HepG2 (cell line): ENCODE measurements at regions of chr19 and their contacts with region 1.

Region 1: DNA sequence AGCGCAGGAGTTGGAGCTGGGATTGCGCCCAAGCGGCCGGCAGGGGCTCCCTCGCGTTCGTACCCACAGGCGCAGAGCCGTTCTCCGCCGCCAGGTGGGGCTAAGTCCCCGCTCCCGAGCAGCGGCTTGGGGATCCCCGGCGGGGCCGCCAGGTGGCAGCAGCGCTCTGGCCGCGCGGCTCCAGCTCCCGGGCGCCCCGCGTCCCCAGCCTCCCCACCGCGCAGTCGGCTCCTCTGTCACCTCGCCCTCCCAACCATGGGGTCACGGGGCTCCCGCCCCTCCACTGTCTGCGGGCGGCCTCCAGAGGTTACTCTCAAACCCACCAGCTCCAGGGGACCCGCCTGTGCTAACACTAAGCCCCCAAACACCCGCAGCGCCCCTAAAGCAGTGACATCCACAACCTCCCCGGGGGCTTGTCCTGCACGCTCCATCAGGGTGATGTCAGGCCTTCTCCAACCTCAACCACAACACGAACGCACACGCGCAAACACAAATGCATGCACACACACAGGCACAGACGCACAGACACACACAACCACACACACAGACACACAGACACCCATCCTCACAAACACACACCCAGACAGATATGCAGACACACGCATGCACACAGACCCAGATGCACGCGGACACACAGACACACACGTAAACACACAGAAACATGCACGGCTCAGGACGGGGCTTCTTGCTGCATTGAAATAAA is 18.4 kb upstream of the KCTD15 start:
- DNase-seq: peak; percentile 54
- ATAC-seq: peak; percentile 83
- H3K4me3 ChIP-seq: peak overlapping the region in 1 of 3 experiments; percentile 51; a peak in 1 of 6 replicates
- H3K27ac ChIP-seq: no peak overlapping the region
- H3K4me1 ChIP-seq: peaks cover 7% of the 10 kb centered on the region
- H3K27me3 ChIP-seq: peaks cover 6 to 52% of the 10 kb centered on the region in 2 experiments
- CTCF ChIP-seq: peak; percentile 97
- EP300 ChIP-seq: no peak
- POLR2A ChIP-seq: no peak
- RAD21 ChIP-seq: peak; percentile 100

Region 2: DNA sequence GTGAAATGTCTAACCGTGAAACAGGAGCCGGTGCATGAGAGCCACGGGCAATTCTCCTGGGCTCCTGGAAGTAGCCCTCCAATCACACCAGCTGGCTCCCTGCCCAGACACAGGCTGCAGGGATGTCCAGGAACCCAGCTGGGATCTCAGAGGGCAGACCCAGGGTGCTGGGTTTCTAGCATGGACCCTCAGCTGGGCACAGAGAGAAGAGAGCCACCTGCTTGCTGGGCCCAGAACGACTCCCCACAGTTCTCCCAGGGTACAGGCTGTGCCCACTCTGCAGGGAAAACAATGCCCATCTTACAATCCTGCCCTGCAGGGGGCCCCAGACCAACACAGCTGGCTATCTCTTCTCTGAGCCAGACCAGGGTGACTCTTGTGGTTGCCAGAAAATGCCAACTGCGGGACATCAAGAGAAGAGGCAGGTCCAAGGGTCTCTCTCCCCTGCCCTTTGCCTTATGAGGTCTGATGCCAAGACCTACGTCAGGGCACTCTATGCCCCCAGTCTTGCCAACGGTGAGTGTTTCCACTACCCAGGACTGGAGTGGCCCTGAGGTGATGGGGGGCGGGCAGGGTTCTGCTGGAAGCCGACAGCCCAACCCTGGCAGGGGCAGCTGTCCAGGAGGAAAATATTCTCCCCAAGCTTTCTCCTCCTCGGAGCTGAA is 340.1 kb before region 1 on chr19:
- CTCF ChIA-PET with region 1: no interaction called
- POLR2A ChIA-PET with region 1: no interaction called
- in situ Hi-C with region 1: no loop called
- intact Hi-C with region 1: no loop called
- DNase-seq: no peak
- ATAC-seq: peak; percentile 39; the same call in 2 of the 3 replicates
- H3K4me3 ChIP-seq: no peak overlapping the region
- H3K27ac ChIP-seq: no peak overlapping the region
- H3K4me1 ChIP-seq: peaks cover 7% of the 10 kb centered on the region; the same call in 1 of the 2 replicates
- H3K27me3 ChIP-seq: no peaks in the 10 kb centered on the region
- CTCF ChIP-seq: peak; percentile 11; the same call in 1 of the 2 replicates
- EP300 ChIP-seq: no peak
- POLR2A ChIP-seq: no peak
- RAD21 ChIP-seq: no peak

Region 3: DNA sequence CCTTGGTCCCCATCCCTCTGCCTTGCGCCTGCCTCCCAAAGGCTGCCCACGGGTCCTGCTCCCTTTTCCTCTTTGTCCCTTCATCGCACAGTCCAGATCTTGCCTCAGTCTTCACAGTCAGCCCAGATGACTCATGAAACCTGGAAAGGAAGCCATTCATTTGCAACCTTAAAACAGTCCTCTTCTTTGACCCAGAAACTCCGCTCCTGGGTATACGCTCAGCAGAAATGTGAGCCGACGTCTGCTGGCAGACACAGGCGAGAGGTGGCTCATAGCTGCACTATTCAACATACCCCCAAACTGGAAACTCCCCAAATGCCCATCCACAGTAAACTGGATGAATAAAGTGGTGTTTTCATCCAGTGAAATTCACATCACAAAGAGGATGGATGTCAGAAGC is 243.0 kb before region 1 on chr19:
- CTCF ChIA-PET with region 1: no interaction called
- POLR2A ChIA-PET with region 1: no interaction called
- in situ Hi-C with region 1: no loop called
- intact Hi-C with region 1: no loop called
- DNase-seq: no peak
- ATAC-seq: no peak
- H3K4me3 ChIP-seq: no peak overlapping the region
- H3K27ac ChIP-seq: no peak overlapping the region
- H3K4me1 ChIP-seq: no peaks in the 10 kb centered on the region
- H3K27me3 ChIP-seq: peaks cover 2 to 28% of the 10 kb centered on the region in 2 experiments; a peak in 4 of 5 replicates
- CTCF ChIP-seq: no peak
- EP300 ChIP-seq: no peak
- POLR2A ChIP-seq: no peak
- RAD21 ChIP-seq: no peak

Region 4: DNA sequence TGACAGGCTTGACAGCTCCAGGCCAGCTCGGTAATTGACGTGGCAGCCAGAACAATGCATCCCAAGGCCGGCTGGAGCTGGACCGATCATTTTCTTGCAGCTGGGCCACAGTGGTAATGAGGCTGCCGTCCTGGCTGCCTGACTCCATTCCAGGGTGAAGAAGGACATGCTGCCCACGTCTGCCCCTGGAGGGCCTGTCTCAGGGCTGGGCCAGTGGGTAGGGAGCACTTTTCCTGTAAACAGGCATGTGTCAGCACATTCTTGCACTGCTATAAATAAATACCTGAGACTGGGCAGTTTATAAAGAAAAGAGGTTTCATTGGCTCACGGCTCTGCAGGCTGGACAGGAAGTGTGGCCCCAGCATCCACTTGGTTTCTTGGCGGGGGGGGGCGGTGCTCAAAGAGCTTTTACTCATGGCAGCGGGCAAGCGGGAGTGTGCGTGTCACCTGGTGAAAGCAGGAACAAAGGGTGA is 19.7 kb before region 1 on chr19:
- CTCF ChIA-PET with region 1: no interaction called
- POLR2A ChIA-PET with region 1: no interaction called
- in situ Hi-C with region 1: no loop called
- intact Hi-C with region 1: no loop called
- DNase-seq: no peak
- ATAC-seq: no peak
- H3K4me3 ChIP-seq: no peak overlapping the region
- H3K27ac ChIP-seq: no peak overlapping the region
- H3K4me1 ChIP-seq: no peaks in the 10 kb centered on the region
- H3K27me3 ChIP-seq: peaks cover 4 to 18% of the 10 kb centered on the region in 2 experiments; a peak in 4 of 5 replicates
- CTCF ChIP-seq: no peak
- EP300 ChIP-seq: no peak
- POLR2A ChIP-seq: no peak
- RAD21 ChIP-seq: no peak

Region 5: GRCh38 chr19:33795370-33796163 is 17.3 kb after region 1 on chr19:
- CTCF ChIA-PET with region 1: interaction called, 11 read pairs
- POLR2A ChIA-PET with region 1: interaction called, 3 read pairs
- in situ Hi-C with region 1: no loop called
- intact Hi-C with region 1: no loop called
- DNase-seq: peak; percentile 66
- ATAC-seq: peak; percentile 86
- H3K4me3 ChIP-seq: peak overlapping the region; percentile 82 to 89 (median 83)
- H3K27ac ChIP-seq: peak overlapping the region; percentile 92
- H3K4me1 ChIP-seq: peaks cover 8% of the 10 kb centered on the region
- H3K27me3 ChIP-seq: peaks cover 1 to 18% of the 10 kb centered on the region in 2 experiments; a peak in 2 of 5 replicates
- CTCF ChIP-seq: peak; percentile 78
- EP300 ChIP-seq: peak in 1 of 2 experiments; percentile 54; a peak in 1 of 4 replicates
- POLR2A ChIP-seq: peak; percentile 73 to 82
- RAD21 ChIP-seq: peak; percentile 84

Region 6: DNA sequence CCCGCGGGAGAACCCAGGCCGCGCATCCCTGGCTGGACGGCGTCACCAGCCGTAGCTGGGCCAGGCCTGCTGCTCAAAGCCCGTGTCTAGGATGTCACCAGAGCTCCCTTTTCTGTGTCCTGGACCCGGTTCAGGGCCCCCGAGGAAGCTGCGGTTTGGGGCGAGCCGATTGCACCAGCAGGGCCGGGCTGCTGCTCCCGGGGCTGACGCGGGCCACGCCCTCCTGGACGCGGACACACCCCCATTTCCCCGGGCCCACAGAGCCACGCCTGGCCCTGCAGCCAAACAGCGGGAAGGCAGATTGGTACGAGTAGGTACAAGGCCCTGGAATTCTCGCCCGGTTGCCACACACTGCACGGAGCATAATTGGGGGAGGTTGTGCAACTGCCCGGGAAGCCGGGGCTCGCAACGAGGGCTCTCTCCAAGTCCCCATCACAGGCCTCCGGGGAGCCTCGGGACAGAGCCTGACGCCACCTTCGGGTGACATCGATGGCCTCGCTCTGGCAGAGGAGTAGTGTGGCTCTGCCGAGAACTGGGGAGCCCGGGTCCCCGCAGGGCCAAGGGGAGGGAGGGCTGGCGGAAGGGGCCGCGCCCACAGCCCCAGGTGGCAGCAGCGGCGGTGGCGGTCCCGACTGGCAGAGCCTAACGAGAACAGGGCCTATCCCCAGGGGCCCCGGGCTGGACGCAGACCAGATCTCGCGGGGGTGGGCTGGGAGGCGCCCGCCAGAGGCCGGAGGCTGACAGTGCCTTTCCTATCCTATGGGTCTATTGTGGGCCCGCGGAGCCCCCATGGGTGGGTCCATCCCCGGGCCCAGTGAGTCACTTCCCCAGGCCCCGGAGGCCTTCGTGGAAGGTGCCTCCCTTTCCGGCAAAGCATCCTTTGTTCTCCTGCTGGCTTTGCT is 41.9 kb after region 1 on chr19:
- CTCF ChIA-PET with region 1: interaction called, 11 read pairs
- POLR2A ChIA-PET with region 1: no interaction called
- in situ Hi-C with region 1: no loop called
- intact Hi-C with region 1: no loop called
- DNase-seq: peak; percentile 53
- ATAC-seq: peak; percentile 85
- H3K4me3 ChIP-seq: peak overlapping the region; percentile 54 to 73 (median 58)
- H3K27ac ChIP-seq: no peak overlapping the region
- H3K4me1 ChIP-seq: peaks cover 20% of the 10 kb centered on the region
- H3K27me3 ChIP-seq: peaks cover 1 to 8% of the 10 kb centered on the region in 2 experiments; a peak in 4 of 5 replicates
- CTCF ChIP-seq: peak; percentile 36; the same call in 1 of the 2 replicates
- EP300 ChIP-seq: no peak
- POLR2A ChIP-seq: no peak
- RAD21 ChIP-seq: no peak

Region 7: GRCh38 chr19:33998739-33999345 is 220.6 kb after region 1 on chr19:
- CTCF ChIA-PET with region 1: interaction called, 55 read pairs
- POLR2A ChIA-PET with region 1: no interaction called
- in situ Hi-C with region 1: loop called (anchors 5 kb)
- intact Hi-C with region 1: loop called (anchors 1 kb)
- DNase-seq: no peak
- ATAC-seq: no peak
- H3K4me3 ChIP-seq: no peak overlapping the region
- H3K27ac ChIP-seq: no peak overlapping the region
- H3K4me1 ChIP-seq: no peaks in the 10 kb centered on the region
- H3K27me3 ChIP-seq: peaks cover 0 to 16% of the 10 kb centered on the region in 2 experiments; a peak in 2 of 5 replicates
- CTCF ChIP-seq: no peak
- EP300 ChIP-seq: no peak
- POLR2A ChIP-seq: no peak
- RAD21 ChIP-seq: no peak

Region 8: DNA sequence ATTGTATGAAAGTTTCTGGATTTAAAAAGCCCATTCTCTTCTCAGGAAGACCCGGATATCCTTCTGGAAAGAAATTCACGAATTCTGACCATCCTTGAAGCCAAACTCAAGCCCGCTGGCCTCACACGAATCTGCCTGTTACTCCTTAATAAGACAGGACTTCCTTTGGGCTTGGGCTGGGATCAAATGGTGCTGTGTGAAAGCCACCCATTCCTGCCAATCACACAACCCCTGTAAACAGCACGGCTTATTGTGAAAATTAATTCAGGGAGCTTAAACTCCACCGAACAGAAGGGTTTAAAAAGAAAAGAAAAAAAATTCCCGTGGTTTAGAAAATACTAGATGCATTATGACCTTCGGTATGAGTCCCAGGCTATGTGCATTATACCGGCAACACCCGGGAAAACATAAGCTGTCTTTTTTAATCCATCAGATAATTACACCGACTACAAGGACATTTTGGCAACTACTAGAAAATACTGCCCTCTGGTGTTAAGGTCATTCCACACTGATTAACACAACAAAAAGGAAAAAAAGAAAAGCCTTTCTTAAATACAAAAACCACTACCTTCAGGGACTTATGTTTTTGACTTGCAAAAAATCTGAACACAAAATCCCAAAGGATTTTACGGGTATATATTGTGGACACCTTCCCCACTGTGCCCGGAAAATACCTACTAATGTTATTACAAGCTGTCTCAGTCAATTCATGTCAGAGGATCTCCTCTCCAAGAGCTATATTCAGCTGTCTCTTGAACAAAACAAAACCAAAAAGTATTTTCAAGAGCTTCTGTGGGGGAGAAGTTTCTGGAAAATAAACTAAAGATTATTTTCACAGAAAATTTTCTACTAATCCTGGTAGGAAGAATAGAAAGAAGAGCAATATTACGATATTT is 318.0 kb after region 1 on chr19:
- CTCF ChIA-PET with region 1: interaction called, 148 read pairs
- POLR2A ChIA-PET with region 1: interaction called, 7 read pairs
- in situ Hi-C with region 1: loop called (anchors 5 kb)
- intact Hi-C with region 1: no loop called
- DNase-seq: peak; percentile 41
- ATAC-seq: no peak
- H3K4me3 ChIP-seq: no peak overlapping the region
- H3K27ac ChIP-seq: no peak overlapping the region
- H3K4me1 ChIP-seq: no peaks in the 10 kb centered on the region
- H3K27me3 ChIP-seq: peaks cover 0 to 15% of the 10 kb centered on the region in 2 experiments; a peak in 2 of 5 replicates
- CTCF ChIP-seq: peak; percentile 58
- EP300 ChIP-seq: no peak
- POLR2A ChIP-seq: no peak
- RAD21 ChIP-seq: peak; percentile 39; the same call in 1 of the 2 replicates

Region 9: GRCh38 chr19:34145741-34146202 is 367.5 kb after region 1 on chr19:
- CTCF ChIA-PET with region 1: interaction called, 19 read pairs
- POLR2A ChIA-PET with region 1: no interaction called
- in situ Hi-C with region 1: no loop called
- intact Hi-C with region 1: loop called (anchors 2 kb)
- DNase-seq: peak; percentile 46
- ATAC-seq: peak; percentile 62
- H3K4me3 ChIP-seq: no peak overlapping the region
- H3K27ac ChIP-seq: no peak overlapping the region
- H3K4me1 ChIP-seq: peaks cover 10% of the 10 kb centered on the region; the same call in 1 of the 2 replicates
- H3K27me3 ChIP-seq: no peaks in the 10 kb centered on the region
- CTCF ChIP-seq: peak; percentile 88
- EP300 ChIP-seq: no peak
- POLR2A ChIP-seq: no peak
- RAD21 ChIP-seq: peak; percentile 62